Activated CD4-positive, alpha-beta T cell treated with anti-CD3 and anti-CD28 coated beads for 36 hours (primary cell): ENCODE measurements at regions of chr10 and their contacts with region 1.

Region 1: GRCh38 chr10:95531994-95532399 is 29.2 kb downstream of the SORBS1 start:
- DNase-seq: no peak
- ATAC-seq: no peak
- H3K4me3 Mint-ChIP-seq: no peak overlapping the region
- H3K27ac Mint-ChIP-seq: no peak overlapping the region
- H3K4me1 Mint-ChIP-seq: peaks cover 6% of the 10 kb centered on the region
- H3K27me3 Mint-ChIP-seq: peaks cover 10% of the 10 kb centered on the region

Region 2: DNA sequence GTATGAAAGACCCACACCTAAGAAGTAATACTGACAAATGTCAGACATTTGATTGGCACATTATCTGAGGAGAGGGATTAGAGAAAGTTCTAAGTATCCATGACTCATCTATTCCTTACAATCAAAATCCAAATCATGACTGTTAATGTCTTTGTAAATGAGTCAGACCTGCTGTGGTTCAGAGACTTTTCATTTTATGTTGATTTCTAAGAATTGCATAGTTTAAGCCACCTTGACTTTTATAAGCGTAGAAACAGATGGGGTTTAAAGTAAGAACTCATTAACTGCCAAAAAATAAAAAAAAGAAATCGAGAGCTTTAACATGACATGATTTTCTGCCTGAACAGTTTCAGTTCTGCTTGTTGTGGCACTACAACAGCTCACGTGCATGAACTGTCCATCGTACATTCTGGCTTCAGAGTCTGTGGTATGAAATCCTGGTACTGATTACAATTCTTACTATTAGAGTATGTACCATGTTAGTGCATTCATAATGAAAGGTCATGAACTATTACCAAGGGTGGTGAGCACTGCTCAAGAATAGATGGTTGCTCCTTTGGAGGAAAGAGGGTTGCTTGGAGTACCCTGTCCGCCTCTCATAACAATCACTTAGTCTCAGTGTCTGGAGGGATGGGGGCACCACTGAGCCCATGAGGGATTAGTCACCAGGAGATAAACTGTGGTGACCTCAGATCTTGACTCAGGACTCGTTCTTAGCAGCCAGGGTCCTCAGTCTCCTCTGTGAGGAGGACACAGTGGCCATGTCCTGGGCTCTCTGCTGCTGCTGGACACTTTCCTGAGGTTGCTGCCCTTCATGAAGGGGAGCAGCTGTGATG is 295.7 kb before region 1 on chr10:
- CTCF ChIA-PET with region 1: no interaction called
- POLR2A ChIA-PET with region 1: no interaction called
- intact Hi-C with region 1: loop called in 1 of 2 experiments (anchors 1 kb)
- DNase-seq: peak; percentile 56
- ATAC-seq: peak; percentile 87
- H3K4me3 Mint-ChIP-seq: peak overlapping the region; percentile 19
- H3K27ac Mint-ChIP-seq: peak overlapping the region; percentile 85
- H3K4me1 Mint-ChIP-seq: peaks cover 29% of the 10 kb centered on the region
- H3K27me3 Mint-ChIP-seq: peaks cover 15% of the 10 kb centered on the region

Region 3: GRCh38 chr10:95485445-95485844 is 46.6 kb before region 1 on chr10:
- CTCF ChIA-PET with region 1: no interaction called
- POLR2A ChIA-PET with region 1: no interaction called
- intact Hi-C with region 1: loop called in 1 of 2 experiments (anchors 2 kb)
- DNase-seq: peak; percentile 14
- ATAC-seq: peak; percentile 93
- H3K4me3 Mint-ChIP-seq: no peak overlapping the region
- H3K27ac Mint-ChIP-seq: peak overlapping the region; percentile 80
- H3K4me1 Mint-ChIP-seq: peaks cover 8% of the 10 kb centered on the region
- H3K27me3 Mint-ChIP-seq: no peaks in the 10 kb centered on the region

Region 4: DNA sequence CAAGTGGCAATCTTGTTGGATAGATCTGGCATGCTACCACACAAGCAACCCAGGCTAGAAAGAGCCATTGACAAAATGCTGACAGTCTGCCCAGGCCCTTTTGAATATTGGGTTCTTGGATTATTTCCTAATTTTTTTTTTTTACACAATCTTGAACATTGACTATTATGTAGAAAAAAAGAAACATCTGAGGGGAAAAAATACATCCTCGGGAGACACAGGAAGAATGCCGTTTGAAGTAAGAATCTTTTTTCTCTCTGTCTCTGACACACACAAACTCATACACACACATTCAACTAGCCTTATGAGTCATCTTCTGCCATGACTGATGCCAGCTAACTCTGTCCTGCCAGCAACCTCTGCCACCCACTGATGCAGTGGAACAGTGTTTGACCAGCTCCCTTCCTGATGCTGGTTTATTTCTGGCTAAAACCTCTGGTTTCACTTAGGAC is 18.0 kb before region 1 on chr10:
- CTCF ChIA-PET with region 1: no interaction called
- POLR2A ChIA-PET with region 1: no interaction called
- intact Hi-C with region 1: loop called in 1 of 2 experiments (anchors 1 kb)
- DNase-seq: peak; percentile 54
- ATAC-seq: peak; percentile 96
- H3K4me3 Mint-ChIP-seq: no peak overlapping the region
- H3K27ac Mint-ChIP-seq: no peak overlapping the region
- H3K4me1 Mint-ChIP-seq: peaks cover 11% of the 10 kb centered on the region
- H3K27me3 Mint-ChIP-seq: peaks cover 4% of the 10 kb centered on the region

Region 5: DNA sequence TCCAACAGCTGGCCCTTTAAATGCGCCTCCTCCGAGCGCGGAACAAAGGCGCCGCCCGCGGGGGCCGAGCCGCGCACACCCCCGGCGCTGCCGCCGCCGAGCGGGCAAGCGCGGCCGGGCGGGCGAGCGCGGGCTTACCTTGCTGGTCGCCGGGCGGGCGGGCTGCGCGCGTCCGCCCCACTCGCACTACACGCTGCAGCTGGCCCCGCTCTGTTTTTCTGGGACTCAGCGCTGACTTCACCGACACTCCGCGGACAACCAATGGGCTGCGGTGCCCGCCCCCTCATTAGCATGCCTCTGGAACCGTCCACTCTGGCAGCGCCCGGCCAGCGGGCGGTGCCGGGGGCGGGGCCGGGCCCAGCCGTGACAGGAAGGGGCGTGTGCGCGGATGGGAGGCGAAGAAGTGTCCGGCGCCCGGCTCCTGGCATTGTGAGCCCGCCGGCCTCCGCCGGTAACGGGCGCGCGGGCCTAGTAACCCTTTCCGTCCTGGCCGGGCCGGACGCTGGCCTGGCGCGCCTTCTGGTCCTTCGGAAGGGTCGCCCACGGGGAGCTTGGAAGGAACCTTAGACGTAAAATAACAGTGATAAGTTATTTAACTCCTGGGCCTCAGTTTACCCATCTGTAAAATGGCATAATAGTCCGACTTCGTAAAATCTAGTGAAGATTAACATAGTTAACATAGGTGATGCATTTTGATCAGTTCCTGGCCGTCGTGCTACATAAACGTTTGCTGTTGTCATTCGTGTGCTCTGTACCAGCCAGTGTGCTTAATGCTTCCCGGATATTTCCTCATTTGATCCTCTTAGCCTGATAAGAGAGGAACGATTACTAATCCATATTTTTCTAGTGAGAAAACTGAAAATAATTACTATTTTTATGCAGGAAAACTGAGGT is 29.4 kb after region 1 on chr10 and contains the start of gene SORBS1:
- CTCF ChIA-PET with region 1: interaction called, 3 read pairs
- POLR2A ChIA-PET with region 1: no interaction called
- intact Hi-C with region 1: loop called in 1 of 2 experiments (anchors 1 kb)
- DNase-seq: peak; percentile 91
- ATAC-seq: peak; percentile 99
- H3K4me3 Mint-ChIP-seq: peak within 1 kb of the TSS; percentile 85
- H3K27ac Mint-ChIP-seq: no peak within 1 kb of the TSS
- H3K4me1 Mint-ChIP-seq: peaks cover 9% of the 10 kb centered on the region
- H3K27me3 Mint-ChIP-seq: peaks cover 6% of the 10 kb centered on the region
- total RNA-seq, gene SORBS1: 0.69 to 1.0 TPM

Region 6: GRCh38 chr10:95572131-95572820 is 40.3 kb after region 1 on chr10:
- CTCF ChIA-PET with region 1: no interaction called
- POLR2A ChIA-PET with region 1: no interaction called
- intact Hi-C with region 1: no loop called
- DNase-seq: no peak
- ATAC-seq: no peak
- H3K4me3 Mint-ChIP-seq: no peak overlapping the region
- H3K27ac Mint-ChIP-seq: no peak overlapping the region
- H3K4me1 Mint-ChIP-seq: no peaks in the 10 kb centered on the region
- H3K27me3 Mint-ChIP-seq: peaks cover 12% of the 10 kb centered on the region